ENCODE measurements at regions of chr18 and their contacts with region 1.

Region 1: GRCh38 chr18:11872479-11873136 is 21.4 kb downstream of the CHMP1B start:
- DNase-seq: peak in 3 of 9 experiments; percentile 36 to 53 (median 37)
- ATAC-seq: peak; percentile 46
- H3K4me3 ChIP-seq: no peak overlapping the region
- H3K4me3 Mint-ChIP-seq: no peak overlapping the region
- H3K27ac ChIP-seq: no peak overlapping the region
- H3K27ac Mint-ChIP-seq: no peak overlapping the region
- H3K4me1 ChIP-seq: no peaks in the 10 kb centered on the region
- H3K4me1 Mint-ChIP-seq: no peaks in the 10 kb centered on the region
- H3K27me3 ChIP-seq: peaks cover 0 to 2% of the 10 kb centered on the region in 2 experiments
- H3K27me3 Mint-ChIP-seq: peaks cover 4% of the 10 kb centered on the region
- CTCF ChIP-seq: peak; percentile 50

Region 2: GRCh38 chr18:10851824-10852319 is 1020.7 kb before region 1 on chr18:
- CTCF ChIA-PET with region 1: no interaction called
- POLR2A ChIA-PET with region 1: no interaction called
- intact Hi-C with region 1: loop called in 1 of 2 experiments (anchors 10 kb)
- DNase-seq: peak in 2 of 9 experiments; percentile 16 to 38
- ATAC-seq: no peak
- H3K4me3 ChIP-seq: no peak overlapping the region
- H3K4me3 Mint-ChIP-seq: no peak overlapping the region
- H3K27ac ChIP-seq: no peak overlapping the region
- H3K27ac Mint-ChIP-seq: no peak overlapping the region
- H3K4me1 ChIP-seq: no peaks in the 10 kb centered on the region
- H3K4me1 Mint-ChIP-seq: no peaks in the 10 kb centered on the region
- H3K27me3 ChIP-seq: no peaks in the 10 kb centered on the region
- H3K27me3 Mint-ChIP-seq: peaks cover 5% of the 10 kb centered on the region
- CTCF ChIP-seq: peak; percentile 43

Region 3: DNA sequence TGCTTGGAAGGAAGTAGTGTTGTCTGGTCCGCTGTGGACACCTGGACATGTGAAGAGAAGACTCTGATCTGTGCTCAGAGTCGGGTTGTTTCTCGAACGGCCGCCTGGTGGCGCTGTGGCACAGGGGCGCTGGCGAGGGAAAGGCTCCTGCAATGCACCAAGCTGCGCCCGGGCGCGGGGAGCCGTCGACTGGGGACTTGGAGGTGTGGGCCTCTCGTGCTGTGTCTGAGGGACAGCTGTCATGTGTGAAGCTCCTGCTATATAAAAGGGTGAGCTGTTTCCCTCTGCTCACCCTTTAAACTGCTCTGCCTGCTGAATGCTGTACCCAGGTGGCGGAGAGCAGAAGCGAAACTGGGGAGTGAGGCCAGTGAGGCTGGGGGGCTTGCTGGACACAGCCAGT is 139.6 kb before region 1 on chr18:
- CTCF ChIA-PET with region 1: interaction called, 13 read pairs
- POLR2A ChIA-PET with region 1: no interaction called
- intact Hi-C with region 1: loop called in 1 of 2 experiments (anchors 1 kb)
- DNase-seq: peak; percentile 32 to 75 (median 64)
- ATAC-seq: peak; percentile 57
- H3K4me3 ChIP-seq: no peak overlapping the region
- H3K4me3 Mint-ChIP-seq: peak overlapping the region; percentile 29
- H3K27ac ChIP-seq: no peak overlapping the region
- H3K27ac Mint-ChIP-seq: no peak overlapping the region
- H3K4me1 ChIP-seq: no peaks in the 10 kb centered on the region
- H3K4me1 Mint-ChIP-seq: peaks cover 4% of the 10 kb centered on the region
- H3K27me3 ChIP-seq: peaks cover 0 to 3% of the 10 kb centered on the region in 2 experiments
- H3K27me3 Mint-ChIP-seq: peaks cover 34% of the 10 kb centered on the region
- CTCF ChIP-seq: peak; percentile 72

Region 4: GRCh38 chr18:11826836-11827235 is 45.8 kb before region 1 on chr18:
- CTCF ChIA-PET with region 1: no interaction called
- POLR2A ChIA-PET with region 1: no interaction called
- intact Hi-C with region 1: loop called in 1 of 2 experiments (anchors 10 kb)
- DNase-seq: no peak
- ATAC-seq: no peak
- H3K4me3 ChIP-seq: no peak overlapping the region
- H3K4me3 Mint-ChIP-seq: no peak overlapping the region
- H3K27ac ChIP-seq: no peak overlapping the region
- H3K27ac Mint-ChIP-seq: no peak overlapping the region
- H3K4me1 ChIP-seq: no peaks in the 10 kb centered on the region
- H3K4me1 Mint-ChIP-seq: no peaks in the 10 kb centered on the region
- H3K27me3 ChIP-seq: no peaks in the 10 kb centered on the region
- H3K27me3 Mint-ChIP-seq: no peaks in the 10 kb centered on the region
- CTCF ChIP-seq: no peak

Region 5: DNA sequence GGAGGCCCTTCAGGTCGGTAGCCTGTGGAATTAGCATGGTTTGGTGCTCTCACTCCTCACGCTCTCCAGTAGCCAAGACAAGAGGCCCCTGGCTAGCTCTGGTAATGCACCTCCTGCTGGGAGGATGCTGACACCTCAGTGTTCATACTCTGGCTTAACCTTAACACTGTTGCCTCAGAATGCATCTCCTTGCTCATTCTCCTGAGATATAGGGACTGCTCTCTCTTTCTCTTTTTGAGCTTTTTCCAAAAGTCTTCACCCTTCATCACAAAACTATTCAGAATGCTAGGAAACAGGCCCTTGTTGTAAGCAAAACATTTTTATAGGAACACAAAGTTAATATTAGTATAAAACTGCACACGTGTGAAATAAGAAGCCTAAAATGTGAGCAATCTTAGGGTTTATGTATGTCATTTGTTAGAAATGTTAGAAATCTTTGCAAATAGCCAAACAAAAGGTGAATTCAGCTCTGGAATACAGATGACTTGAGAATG is 91.4 kb after region 1 on chr18:
- CTCF ChIA-PET with region 1: no interaction called
- POLR2A ChIA-PET with region 1: no interaction called
- intact Hi-C with region 1: no loop called
- DNase-seq: no peak
- ATAC-seq: no peak
- H3K4me3 ChIP-seq: no peak overlapping the region
- H3K4me3 Mint-ChIP-seq: no peak overlapping the region
- H3K27ac ChIP-seq: no peak overlapping the region
- H3K27ac Mint-ChIP-seq: no peak overlapping the region
- H3K4me1 ChIP-seq: no peaks in the 10 kb centered on the region
- H3K4me1 Mint-ChIP-seq: no peaks in the 10 kb centered on the region
- H3K27me3 ChIP-seq: no peaks in the 10 kb centered on the region
- H3K27me3 Mint-ChIP-seq: no peaks in the 10 kb centered on the region
- CTCF ChIP-seq: no peak

Region 6: DNA sequence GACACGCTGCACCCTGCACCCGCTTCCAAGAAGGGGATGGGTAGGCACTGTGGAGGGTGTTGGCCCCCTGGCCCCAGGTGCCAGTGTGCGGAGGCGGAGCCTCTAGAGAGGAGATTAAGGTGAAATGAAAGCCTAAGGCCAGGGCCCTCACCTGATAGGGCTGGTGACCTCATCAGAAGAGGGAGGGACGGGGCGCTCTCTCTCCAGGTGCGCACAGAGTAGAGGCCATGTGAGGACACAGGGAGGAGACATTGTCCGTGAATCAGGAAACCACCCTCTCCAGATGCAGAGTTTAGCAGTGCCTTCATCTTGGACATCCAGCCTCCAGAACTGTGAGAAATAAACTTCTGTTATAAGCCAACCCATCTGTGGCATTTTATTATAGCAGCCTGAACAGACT is 892.5 kb after region 1 on chr18:
- CTCF ChIA-PET with region 1: no interaction called
- POLR2A ChIA-PET with region 1: no interaction called
- intact Hi-C with region 1: no loop called
- DNase-seq: no peak
- ATAC-seq: no peak
- H3K4me3 ChIP-seq: no peak overlapping the region
- H3K4me3 Mint-ChIP-seq: no peak overlapping the region
- H3K27ac ChIP-seq: no peak overlapping the region
- H3K27ac Mint-ChIP-seq: no peak overlapping the region
- H3K4me1 ChIP-seq: no peaks in the 10 kb centered on the region
- H3K4me1 Mint-ChIP-seq: peaks cover 2% of the 10 kb centered on the region
- H3K27me3 ChIP-seq: no peaks in the 10 kb centered on the region
- H3K27me3 Mint-ChIP-seq: no peaks in the 10 kb centered on the region
- CTCF ChIP-seq: no peak